Activated CD4-positive, alpha-beta memory T cell treated with anti-CD3 and anti-CD28 coated beads for 36 hours (primary cell): ENCODE measurements at regions of chr13 and their contacts with region 1.

Region 1: GRCh38 chr13:41960639-41961465 is at the start of gene VWA8:
- DNase-seq: peak; percentile 89
- H3K4me3 Mint-ChIP-seq: peak within 1 kb of the TSS; percentile 90
- H3K27ac Mint-ChIP-seq: peak within 1 kb of the TSS; percentile 97
- H3K4me1 Mint-ChIP-seq: peaks cover 52% of the 10 kb centered on the region
- H3K27me3 Mint-ChIP-seq: no peaks in the 10 kb centered on the region
- total RNA-seq, gene VWA8: 16.8 to 17.1 TPM

Region 2: GRCh38 chr13:41299316-41300094 is 661.3 kb before region 1 on chr13:
- CTCF ChIA-PET with region 1: no interaction called
- POLR2A ChIA-PET with region 1: no interaction called
- intact Hi-C with region 1: no loop called
- DNase-seq: no peak
- H3K4me3 Mint-ChIP-seq: no peak overlapping the region
- H3K27ac Mint-ChIP-seq: no peak overlapping the region
- H3K4me1 Mint-ChIP-seq: no peaks in the 10 kb centered on the region
- H3K27me3 Mint-ChIP-seq: peaks cover 4% of the 10 kb centered on the region

Region 3: GRCh38 chr13:41352935-41353840 is 607.7 kb before region 1 on chr13:
- CTCF ChIA-PET with region 1: no interaction called
- POLR2A ChIA-PET with region 1: no interaction called
- intact Hi-C with region 1: loop called (anchors 5 kb)
- DNase-seq: peak; percentile 73
- H3K4me3 Mint-ChIP-seq: no peak overlapping the region
- H3K27ac Mint-ChIP-seq: peak overlapping the region; percentile 73
- H3K4me1 Mint-ChIP-seq: peaks cover 53% of the 10 kb centered on the region
- H3K27me3 Mint-ChIP-seq: no peaks in the 10 kb centered on the region

Region 4: GRCh38 chr13:41465241-41465847 is 495.5 kb before region 1 on chr13:
- CTCF ChIA-PET with region 1: no interaction called
- POLR2A ChIA-PET with region 1: no interaction called
- intact Hi-C with region 1: loop called (anchors 1 kb)
- DNase-seq: peak; percentile 96
- H3K4me3 Mint-ChIP-seq: peak overlapping the region; percentile 66
- H3K27ac Mint-ChIP-seq: peak overlapping the region; percentile 97
- H3K4me1 Mint-ChIP-seq: peaks cover 92% of the 10 kb centered on the region
- H3K27me3 Mint-ChIP-seq: no peaks in the 10 kb centered on the region

Region 5: GRCh38 chr13:41588899-41589298 is 372.0 kb before region 1 on chr13:
- CTCF ChIA-PET with region 1: no interaction called
- POLR2A ChIA-PET with region 1: no interaction called
- intact Hi-C with region 1: no loop called
- DNase-seq: peak; percentile 75
- H3K4me3 Mint-ChIP-seq: no peak overlapping the region
- H3K27ac Mint-ChIP-seq: no peak overlapping the region
- H3K4me1 Mint-ChIP-seq: peaks cover 13% of the 10 kb centered on the region
- H3K27me3 Mint-ChIP-seq: no peaks in the 10 kb centered on the region

Region 6: GRCh38 chr13:41916173-41916954 is 44.5 kb before region 1 on chr13:
- CTCF ChIA-PET with region 1: interaction called, 7 read pairs
- POLR2A ChIA-PET with region 1: interaction called, 9 read pairs
- intact Hi-C with region 1: loop called (anchors 1 kb)
- DNase-seq: no peak
- H3K4me3 Mint-ChIP-seq: peak overlapping the region; percentile 54
- H3K27ac Mint-ChIP-seq: peak overlapping the region; percentile 84
- H3K4me1 Mint-ChIP-seq: peaks cover 29% of the 10 kb centered on the region
- H3K27me3 Mint-ChIP-seq: no peaks in the 10 kb centered on the region

Region 7: GRCh38 chr13:41981952-41982715 is 21.3 kb after region 1 on chr13:
- CTCF ChIA-PET with region 1: interaction called, 4 read pairs
- POLR2A ChIA-PET with region 1: interaction called, 3 read pairs
- intact Hi-C with region 1: loop called (anchors 1 kb)
- DNase-seq: no peak
- H3K4me3 Mint-ChIP-seq: no peak overlapping the region
- H3K27ac Mint-ChIP-seq: no peak overlapping the region
- H3K4me1 Mint-ChIP-seq: peaks cover 8% of the 10 kb centered on the region
- H3K27me3 Mint-ChIP-seq: peaks cover 4% of the 10 kb centered on the region

Region 8: DNA sequence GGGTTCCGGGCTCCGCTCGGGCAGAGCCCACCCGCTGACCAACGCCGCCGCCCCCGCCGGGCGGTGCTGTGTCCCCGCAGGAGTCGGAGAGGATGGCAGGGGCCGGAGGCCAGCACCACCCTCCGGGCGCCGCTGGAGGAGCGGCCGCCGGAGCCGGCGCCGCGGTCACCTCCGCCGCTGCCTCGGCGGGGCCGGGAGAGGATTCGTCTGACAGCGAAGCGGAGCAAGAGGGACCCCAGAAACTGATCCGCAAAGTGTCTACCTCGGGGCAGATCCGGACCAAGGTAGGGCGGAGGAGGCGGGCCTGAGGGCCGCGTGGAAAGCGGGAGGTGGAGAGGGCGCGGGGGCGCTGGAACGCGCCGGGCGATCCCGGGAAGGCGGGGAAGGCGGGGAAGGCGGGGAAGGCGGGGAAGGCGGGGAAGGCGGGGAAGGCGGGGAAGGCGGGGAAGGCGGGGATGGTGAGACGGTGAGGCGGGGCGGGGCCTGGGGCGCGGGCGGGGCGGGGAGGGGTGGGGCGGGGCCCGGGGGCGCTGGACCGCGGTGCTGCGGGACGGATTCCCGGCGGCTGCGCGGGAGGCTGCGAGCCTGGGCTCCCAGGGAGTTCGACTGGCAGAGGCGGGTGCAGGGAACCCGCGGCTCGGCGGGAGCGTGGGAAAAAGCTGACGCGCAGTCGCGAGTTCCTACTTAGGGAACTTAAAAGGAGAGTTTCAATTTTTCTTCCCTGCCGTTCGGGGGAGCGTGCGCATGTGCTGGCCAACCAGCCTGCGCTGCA is 88.0 kb after region 1 on chr13:
- CTCF ChIA-PET with region 1: no interaction called
- POLR2A ChIA-PET with region 1: interaction called, 3 read pairs
- intact Hi-C with region 1: loop called (anchors 2 kb)
- DNase-seq: peak; percentile 75
- H3K4me3 Mint-ChIP-seq: peak overlapping the region; percentile 83
- H3K27ac Mint-ChIP-seq: peak overlapping the region; percentile 67
- H3K4me1 Mint-ChIP-seq: peaks cover 12% of the 10 kb centered on the region
- H3K27me3 Mint-ChIP-seq: no peaks in the 10 kb centered on the region

Region 9: DNA sequence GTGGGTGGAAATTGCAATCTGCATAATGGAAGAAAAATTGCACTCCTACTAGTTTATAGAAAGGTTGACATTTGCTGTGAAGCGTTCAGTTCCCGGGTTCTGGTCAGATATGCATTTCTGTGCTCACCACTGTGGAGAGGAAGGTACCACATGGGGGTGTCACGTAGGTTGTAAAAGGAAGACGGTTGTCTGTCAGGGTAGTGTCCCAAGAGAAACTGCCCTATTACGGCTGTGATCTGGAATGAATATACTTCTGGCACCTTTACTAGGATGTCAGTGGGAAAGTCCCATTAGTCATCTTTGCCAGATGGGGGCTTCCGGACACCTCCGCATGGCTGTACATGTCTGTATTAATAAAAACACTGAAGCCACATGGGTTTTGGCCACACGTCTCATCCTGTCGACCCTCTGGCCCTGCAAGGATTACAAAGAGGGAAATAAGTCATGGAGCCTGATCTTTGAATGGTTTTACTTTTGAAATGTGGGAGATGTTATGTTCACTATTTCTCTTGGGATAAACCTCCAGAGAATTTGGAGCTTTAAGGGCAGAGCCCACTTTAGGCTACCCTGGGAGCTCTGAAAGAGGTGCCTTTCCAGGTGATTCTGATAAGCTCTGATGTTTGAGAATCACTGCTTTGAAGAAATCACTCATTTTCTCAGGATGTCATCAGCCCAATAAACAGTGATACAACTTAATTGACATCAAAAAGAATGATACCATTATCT is 445.0 kb after region 1 on chr13:
- CTCF ChIA-PET with region 1: no interaction called
- POLR2A ChIA-PET with region 1: no interaction called
- intact Hi-C with region 1: loop called (anchors 5 kb)
- DNase-seq: peak; percentile 89
- H3K4me3 Mint-ChIP-seq: peak overlapping the region; percentile 59
- H3K27ac Mint-ChIP-seq: peak overlapping the region; percentile 93
- H3K4me1 Mint-ChIP-seq: peaks cover 75% of the 10 kb centered on the region
- H3K27me3 Mint-ChIP-seq: no peaks in the 10 kb centered on the region